ENCODE measurements at regions of chr10 and their contacts with region 1.

Region 1: DNA sequence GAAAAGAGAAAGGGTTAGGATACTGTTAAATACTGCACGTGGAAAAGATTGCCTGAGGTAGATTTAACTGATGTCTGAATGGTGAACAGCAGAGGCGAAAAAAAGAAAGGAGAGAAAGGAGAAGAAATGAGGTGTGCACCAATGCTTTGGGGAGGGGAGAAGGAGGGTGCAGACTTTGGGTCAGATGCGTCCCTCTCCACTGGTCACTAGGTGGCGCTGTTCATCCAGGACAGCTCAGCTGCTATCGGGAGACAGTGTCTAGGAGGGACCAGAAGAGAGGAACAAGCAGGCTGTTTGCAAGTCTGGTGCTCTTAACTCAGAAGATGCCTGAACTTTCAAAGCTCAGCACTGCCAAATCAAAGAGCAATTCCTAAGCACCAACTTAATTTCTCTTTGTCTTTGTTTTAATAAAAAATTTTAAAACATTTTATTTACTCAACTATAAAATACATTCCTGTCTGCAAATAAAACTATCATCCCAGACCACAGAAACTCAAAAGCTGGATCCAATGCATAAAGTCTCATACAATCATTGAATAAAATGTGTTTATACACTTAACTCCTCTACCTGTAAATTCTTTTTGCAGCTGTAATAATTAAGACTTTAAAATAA is 83.9 kb upstream of the PDLIM1 start:
- DNase-seq: no peak
- H3K4me3 ChIP-seq: no peak overlapping the region
- CTCF ChIP-seq: peak; percentile 88

Region 2: GRCh38 chr10:95241533-95241932 is 133.2 kb before region 1 on chr10:
- CTCF ChIA-PET with region 1: interaction called, 18 read pairs
- POLR2A ChIA-PET with region 1: no interaction called
- DNase-seq: no peak
- H3K4me3 ChIP-seq: no peak overlapping the region
- CTCF ChIP-seq: no peak

Region 3: GRCh38 chr10:95388539-95388938 is 13.8 kb after region 1 on chr10:
- CTCF ChIA-PET with region 1: interaction called, 13 read pairs
- POLR2A ChIA-PET with region 1: no interaction called
- DNase-seq: no peak
- H3K4me3 ChIP-seq: no peak overlapping the region
- CTCF ChIP-seq: no peak

Region 4: GRCh38 chr10:95601116-95601719 is 226.5 kb after region 1 on chr10:
- CTCF ChIA-PET with region 1: interaction called, 72 read pairs
- POLR2A ChIA-PET with region 1: no interaction called
- DNase-seq: peak; percentile 65
- H3K4me3 ChIP-seq: no peak overlapping the region
- CTCF ChIP-seq: peak; percentile 90